Naive thymus-derived CD8-positive, alpha-beta T cell (primary cell): ENCODE measurements at regions of chr5 and their contacts with region 1.

Region 1: GRCh38 chr5:99054972-99055371 is 126.2 kb upstream of the CHD1 start:
- DNase-seq: peak in 1 of 10 donors; percentile 6
- ATAC-seq: peak in 1 of 2 donors; percentile 57
- H3K4me3 Mint-ChIP-seq: peak overlapping the region in 1 of 10 donors; percentile 5
- H3K27ac Mint-ChIP-seq: peak overlapping the region in 4 of 10 donors; percentile 20 to 76 (median 62)
- H3K4me1 Mint-ChIP-seq: peaks cover 5 to 36% (median 10%) of the 10 kb centered on the region in 4 donors
- H3K27me3 Mint-ChIP-seq: no peaks in the 10 kb centered on the region

Region 2: DNA sequence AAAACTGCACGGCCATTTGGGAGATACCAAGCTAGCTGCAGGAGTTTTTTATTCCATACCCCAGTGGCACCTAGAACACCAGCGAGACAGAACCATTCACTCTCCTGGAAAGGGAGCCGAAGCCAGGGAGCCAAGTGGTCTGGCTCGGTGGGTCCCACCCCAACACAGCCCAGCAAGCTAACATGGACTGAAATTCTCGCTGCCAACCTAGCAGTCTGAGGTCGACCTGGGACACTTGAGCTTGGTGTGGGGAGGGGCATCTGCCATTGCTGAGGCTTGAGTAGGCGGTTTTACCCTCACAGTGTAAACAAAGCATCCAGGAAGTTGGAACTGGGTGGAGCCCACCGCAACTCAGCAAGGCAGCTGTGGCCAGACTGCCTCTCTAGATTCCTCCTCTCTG is 17.3 kb before region 1 on chr5:
- POLR2A ChIA-PET with region 1: interaction called, 22 read pairs
- DNase-seq: peak; percentile 7 to 84 (median 67)
- ATAC-seq: peak; percentile 77 to 85
- H3K4me3 Mint-ChIP-seq: peak overlapping the region in 9 of 10 donors; percentile 5 to 78 (median 71)
- H3K27ac Mint-ChIP-seq: peak overlapping the region; percentile 74 to 96 (median 89)
- H3K4me1 Mint-ChIP-seq: peaks cover 22 to 74% (median 52%) of the 10 kb centered on the region in 4 donors
- H3K27me3 Mint-ChIP-seq: no peaks in the 10 kb centered on the region

Region 3: GRCh38 chr5:99088309-99088708 is 33.3 kb after region 1 on chr5:
- POLR2A ChIA-PET with region 1: no interaction called
- DNase-seq: no peak
- ATAC-seq: no peak
- H3K4me3 Mint-ChIP-seq: no peak overlapping the region
- H3K27ac Mint-ChIP-seq: peak overlapping the region in 1 of 10 donors; percentile 34
- H3K4me1 Mint-ChIP-seq: peaks cover 6 to 10% (median 8%) of the 10 kb centered on the region in 4 donors
- H3K27me3 Mint-ChIP-seq: peaks cover 0 to 5% (median 0%) of the 10 kb centered on the region in 5 donors